Activated T-helper 2 cell treated with anti-CD3 and anti-CD28 coated beads, Interferon-gamma antibody, Interleukin-2, Interleukin-4, amounts not matched to agents 10 μg/mL and 5 μg/mL and 100 μg/mL, durations not matched to agents 14 hours and 24 hours and 36 hours (primary cell): ENCODE measurements at regions of chr15 and their contacts with region 1.

Region 1: GRCh38 chr15:41660235-41661077 is at the start of gene MGA:
- DNase-seq: peak; percentile 88
- H3K4me3 Mint-ChIP-seq: peak within 1 kb of the TSS; percentile 88
- H3K27ac Mint-ChIP-seq: peak within 1 kb of the TSS; percentile 87
- H3K4me1 Mint-ChIP-seq: peaks cover 32% of the 10 kb centered on the region
- H3K27me3 Mint-ChIP-seq: peaks cover 25% of the 10 kb centered on the region
- total RNA-seq, gene MGA: 37.7 and 38.2 TPM in 2 replicates

Region 2: DNA sequence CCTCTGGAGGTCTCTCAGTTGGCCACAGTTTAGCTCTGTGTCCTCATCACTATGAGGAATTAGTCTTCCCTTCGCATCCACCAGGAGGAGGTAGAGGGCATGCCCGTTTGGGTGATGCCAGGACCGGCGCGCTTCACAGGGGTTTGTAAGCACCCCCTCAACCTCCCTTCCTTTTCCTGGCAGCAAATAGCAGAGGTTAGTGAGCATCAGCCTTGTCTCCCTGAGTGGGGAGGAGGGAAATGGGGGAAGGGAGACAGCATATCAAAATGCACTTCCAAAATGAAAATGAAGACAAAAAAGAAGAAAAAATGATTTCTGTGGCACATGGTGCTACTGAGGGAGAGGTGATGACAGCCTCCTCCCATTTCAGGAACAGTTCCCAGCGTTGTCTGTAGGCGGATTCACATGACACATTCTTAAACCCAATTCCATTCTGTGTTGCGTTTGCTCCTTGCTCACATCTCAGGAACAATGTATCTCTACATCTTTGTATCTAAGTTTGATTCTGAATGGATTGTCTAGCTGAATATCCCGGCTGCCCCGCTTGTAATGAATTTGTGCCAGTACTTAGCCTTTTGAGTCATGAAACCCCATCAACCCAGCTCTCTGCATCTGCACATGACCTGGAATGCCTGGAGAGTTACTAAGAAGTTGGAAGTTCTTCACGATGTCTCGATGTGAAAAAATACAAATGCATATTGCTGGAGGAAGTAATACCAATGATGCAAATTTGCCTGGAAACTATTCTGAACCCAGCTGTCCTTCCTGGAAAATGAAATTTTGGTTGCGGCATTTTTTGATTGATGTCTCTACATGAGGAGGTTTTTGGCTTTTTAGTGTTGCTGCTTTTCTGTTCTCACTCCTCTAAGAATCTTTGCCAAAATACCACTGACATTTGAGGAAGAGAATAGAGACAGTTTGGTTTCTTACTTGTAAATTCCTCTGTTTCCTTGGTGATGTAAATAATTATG is 56.2 kb before region 1 on chr15:
- intact Hi-C with region 1: no loop called
- DNase-seq: peak; percentile 15
- H3K4me3 Mint-ChIP-seq: peak overlapping the region; percentile 64
- H3K27ac Mint-ChIP-seq: no peak overlapping the region
- H3K4me1 Mint-ChIP-seq: peaks cover 8% of the 10 kb centered on the region
- H3K27me3 Mint-ChIP-seq: peaks cover 33% of the 10 kb centered on the region

Region 3: DNA sequence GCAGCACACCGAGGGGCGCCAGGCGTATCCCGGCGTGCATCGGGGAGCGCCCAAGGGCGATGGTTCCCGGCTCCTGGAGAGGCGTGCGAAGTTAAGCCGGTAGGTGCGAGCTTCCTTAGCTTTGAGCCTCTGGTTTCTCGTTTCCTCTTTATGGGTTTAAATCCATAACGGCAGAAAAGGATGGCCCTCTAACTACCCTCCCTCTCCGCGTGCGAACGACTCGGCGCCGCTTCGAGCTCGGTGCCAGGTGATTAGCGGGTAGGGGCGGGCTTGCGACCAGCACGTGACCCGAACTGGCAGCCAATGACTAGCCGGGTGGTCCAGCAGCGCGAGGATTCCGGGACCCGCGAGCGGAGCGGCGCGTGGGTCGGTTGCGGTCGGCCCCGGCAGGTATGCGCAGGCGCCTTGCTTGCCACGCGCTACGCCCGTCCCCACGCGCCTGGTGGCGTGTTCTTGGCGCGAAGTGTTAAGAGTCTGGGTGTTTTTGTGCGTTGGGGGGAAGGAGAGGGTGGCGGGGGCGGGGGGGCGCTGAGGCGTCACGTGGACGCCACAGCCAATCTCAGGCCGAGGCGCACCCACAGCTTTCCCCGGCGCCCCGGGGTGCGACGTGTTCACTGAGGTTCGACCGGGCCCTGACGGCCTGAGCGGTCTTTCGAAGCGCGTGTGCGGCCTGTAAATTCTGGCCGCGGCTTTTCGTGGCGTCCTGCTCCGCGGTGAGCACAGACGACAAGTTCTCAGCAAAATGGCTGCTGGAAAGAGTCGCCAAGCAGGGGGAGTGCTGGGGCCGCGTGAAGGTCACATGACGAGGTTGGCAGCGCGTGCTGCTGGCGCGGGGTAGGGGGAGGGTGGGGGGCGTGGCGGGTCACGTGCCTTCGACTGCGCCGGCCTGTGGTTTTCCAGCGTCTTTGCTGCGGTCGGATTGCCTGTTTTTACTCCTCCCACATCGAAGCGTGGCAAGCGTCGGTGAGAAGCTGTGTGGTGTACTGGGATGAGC is 39.0 kb before region 1 on chr15:
- intact Hi-C with region 1: loop called (anchors 1 kb)
- DNase-seq: peak; percentile 71
- H3K4me3 Mint-ChIP-seq: peak overlapping the region; percentile 76
- H3K27ac Mint-ChIP-seq: peak overlapping the region; percentile 74
- H3K4me1 Mint-ChIP-seq: peaks cover 8% of the 10 kb centered on the region
- H3K27me3 Mint-ChIP-seq: peaks cover 13% of the 10 kb centered on the region